T-cell (primary cell): ENCODE measurements at regions of chr15 and their contacts with region 1.

Region 1: DNA sequence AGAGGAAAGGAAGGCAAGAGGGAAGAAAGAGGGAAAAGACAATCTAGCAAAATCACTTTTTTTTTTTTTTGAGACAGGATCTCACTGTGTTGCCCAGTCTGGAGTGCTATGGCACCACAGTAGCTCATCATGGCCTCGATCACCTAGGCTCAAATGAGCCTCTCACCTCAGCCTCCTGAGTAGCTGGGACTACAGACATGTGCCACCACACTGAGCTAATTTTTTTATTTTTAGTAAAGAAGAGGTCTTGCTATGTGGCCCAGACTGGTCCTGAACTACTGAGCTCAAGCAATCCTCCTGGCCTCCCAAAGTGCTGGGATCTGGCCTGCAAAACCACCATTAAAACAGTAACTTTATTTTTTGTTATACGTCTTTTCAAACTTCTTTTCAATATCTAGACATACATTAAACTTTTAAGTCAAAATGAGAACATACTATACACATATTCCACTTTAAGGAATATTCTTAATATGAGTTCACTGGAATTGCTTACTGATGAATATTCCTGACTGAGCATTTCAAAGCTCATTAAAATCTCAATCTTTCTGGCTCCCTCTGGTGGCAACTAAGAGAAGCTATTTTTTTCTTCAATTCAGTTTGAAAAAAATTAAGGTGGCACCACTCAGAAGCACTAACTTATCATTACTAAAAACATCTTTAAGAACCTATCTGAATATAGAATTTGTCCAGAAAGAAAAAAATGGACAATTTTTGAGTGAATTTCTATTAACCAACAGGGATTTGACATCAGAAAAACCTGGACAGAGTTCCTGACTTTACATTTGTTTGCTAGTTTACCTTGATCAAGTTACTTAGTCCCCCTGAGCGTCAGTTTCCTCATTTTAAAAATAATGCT is 40.9 kb downstream of the UACA start:
- DNase-seq: peak in 1 of 35 experiments; percentile 70
- ATAC-seq: no peak
- H3K4me3 ChIP-seq: no peak overlapping the region
- H3K4me3 Mint-ChIP-seq: no peak overlapping the region
- H3K27ac ChIP-seq: no peak overlapping the region
- H3K27ac Mint-ChIP-seq: no peak overlapping the region
- H3K4me1 ChIP-seq: no peaks in the 10 kb centered on the region
- H3K4me1 Mint-ChIP-seq: peaks cover 0 to 3% (median 0%) of the 10 kb centered on the region in 3 donors
- H3K27me3 ChIP-seq: peaks cover 2 to 4% of the 10 kb centered on the region in 2 experiments
- H3K27me3 Mint-ChIP-seq: peaks cover 10 to 16% of the 10 kb centered on the region in 2 donors

Region 2: GRCh38 chr15:70636540-70637165 is 85.8 kb before region 1 on chr15:
- CTCF ChIA-PET with region 1: no interaction called
- POLR2A ChIA-PET with region 1: no interaction called
- DNase-seq: peak in 1 of 35 experiments; percentile 10
- ATAC-seq: no peak
- H3K4me3 ChIP-seq: no peak overlapping the region
- H3K4me3 Mint-ChIP-seq: no peak overlapping the region
- H3K27ac ChIP-seq: no peak overlapping the region
- H3K27ac Mint-ChIP-seq: no peak overlapping the region
- H3K4me1 ChIP-seq: no peaks in the 10 kb centered on the region
- H3K4me1 Mint-ChIP-seq: peaks cover 10 to 22% (median 11%) of the 10 kb centered on the region in 3 donors
- H3K27me3 ChIP-seq: peaks cover 0 to 10% of the 10 kb centered on the region in 2 experiments
- H3K27me3 Mint-ChIP-seq: peaks cover 9 to 17% of the 10 kb centered on the region in 2 donors

Region 3: GRCh38 chr15:70669006-70669602 is 53.4 kb before region 1 on chr15:
- CTCF ChIA-PET with region 1: interaction called in 1 of 2 experiments, 10 read pairs
- POLR2A ChIA-PET with region 1: no interaction called
- DNase-seq: no peak
- ATAC-seq: no peak
- H3K4me3 ChIP-seq: no peak overlapping the region
- H3K4me3 Mint-ChIP-seq: no peak overlapping the region
- H3K27ac ChIP-seq: no peak overlapping the region
- H3K27ac Mint-ChIP-seq: no peak overlapping the region
- H3K4me1 ChIP-seq: peaks cover 9 to 25% of the 10 kb centered on the region in 2 experiments
- H3K4me1 Mint-ChIP-seq: peaks cover 22 to 29% (median 27%) of the 10 kb centered on the region in 3 donors
- H3K27me3 ChIP-seq: peaks cover 0 to 6% of the 10 kb centered on the region in 2 experiments
- H3K27me3 Mint-ChIP-seq: peaks cover 3 to 10% of the 10 kb centered on the region in 2 donors

Region 4: GRCh38 chr15:70679919-70680231 is 42.6 kb before region 1 on chr15:
- CTCF ChIA-PET with region 1: interaction called in 1 of 2 experiments, 24 read pairs
- POLR2A ChIA-PET with region 1: no interaction called
- DNase-seq: no peak
- ATAC-seq: no peak
- H3K4me3 ChIP-seq: no peak overlapping the region
- H3K4me3 Mint-ChIP-seq: no peak overlapping the region
- H3K27ac ChIP-seq: no peak overlapping the region
- H3K27ac Mint-ChIP-seq: no peak overlapping the region
- H3K4me1 ChIP-seq: no peaks in the 10 kb centered on the region
- H3K4me1 Mint-ChIP-seq: peaks cover 3 to 5% (median 3%) of the 10 kb centered on the region in 3 donors
- H3K27me3 ChIP-seq: peaks cover 2 to 4% of the 10 kb centered on the region in 2 experiments
- H3K27me3 Mint-ChIP-seq: peaks cover 15% of the 10 kb centered on the region in 2 donors

Region 5: GRCh38 chr15:70837476-70837875 is 115.0 kb after region 1 on chr15:
- CTCF ChIA-PET with region 1: no interaction called
- POLR2A ChIA-PET with region 1: no interaction called
- DNase-seq: no peak
- ATAC-seq: no peak
- H3K4me3 ChIP-seq: no peak overlapping the region
- H3K4me3 Mint-ChIP-seq: no peak overlapping the region
- H3K27ac ChIP-seq: no peak overlapping the region
- H3K27ac Mint-ChIP-seq: no peak overlapping the region
- H3K4me1 ChIP-seq: no peaks in the 10 kb centered on the region
- H3K4me1 Mint-ChIP-seq: no peaks in the 10 kb centered on the region
- H3K27me3 ChIP-seq: peaks cover 0 to 4% of the 10 kb centered on the region in 2 experiments
- H3K27me3 Mint-ChIP-seq: peaks cover 4 to 10% of the 10 kb centered on the region in 2 donors